Dorsolateral prefrontal cortex (tissue), 120 donors: ENCODE measurements at regions of chr7 and their contacts with region 1.

Region 1: GRCh38 chr7:79513261-79513660 is 59.8 kb upstream of the MAGI2 start:
- DNase-seq: no peak
- H3K4me3 ChIP-seq: no peak overlapping the region
- H3K27ac ChIP-seq: peak overlapping the region in 47 of 59 donors; percentile 12 to 93 (median 79)
- H3K27me3 ChIP-seq: no peaks in the 10 kb centered on the region
- CTCF ChIP-seq: no peak

Region 2: DNA sequence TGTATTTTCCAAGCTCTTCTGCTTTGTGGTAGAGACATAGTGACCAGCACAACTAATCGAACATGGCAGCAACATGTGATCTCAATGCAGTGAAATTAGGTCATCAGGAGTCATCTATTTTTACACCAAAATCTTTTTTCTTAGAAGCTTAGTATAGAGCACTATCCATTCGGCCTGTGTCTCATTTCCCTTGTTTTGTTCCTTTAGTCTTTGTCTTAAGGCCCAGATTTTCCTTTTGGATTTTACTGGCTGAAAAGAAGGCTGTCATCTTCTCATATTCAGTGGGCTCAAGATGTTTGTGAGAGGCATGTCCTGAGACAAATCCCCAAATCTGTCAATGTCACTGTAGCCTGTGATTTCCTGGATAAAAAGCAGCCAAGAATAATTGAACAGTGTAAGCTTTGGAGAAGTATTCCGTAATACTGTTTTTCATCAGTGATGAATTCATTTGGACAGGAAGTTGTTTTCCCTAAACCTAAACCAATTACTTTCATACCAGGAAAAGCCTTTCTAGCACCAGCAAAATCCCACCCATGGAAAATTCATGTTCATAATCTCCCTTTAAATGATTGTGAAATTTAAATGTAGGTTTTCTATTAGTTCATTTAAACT is 115.0 kb before region 1 on chr7:
- intact Hi-C with region 1: no loop called
- DNase-seq: no peak
- H3K4me3 ChIP-seq: peak overlapping the region in 11 of 59 donors; percentile 1 to 30 (median 5)
- H3K27ac ChIP-seq: peak overlapping the region in 53 of 59 donors; percentile 1 to 80 (median 44)
- H3K27me3 ChIP-seq: no peaks in the 10 kb centered on the region
- CTCF ChIP-seq: no peak

Region 3: DNA sequence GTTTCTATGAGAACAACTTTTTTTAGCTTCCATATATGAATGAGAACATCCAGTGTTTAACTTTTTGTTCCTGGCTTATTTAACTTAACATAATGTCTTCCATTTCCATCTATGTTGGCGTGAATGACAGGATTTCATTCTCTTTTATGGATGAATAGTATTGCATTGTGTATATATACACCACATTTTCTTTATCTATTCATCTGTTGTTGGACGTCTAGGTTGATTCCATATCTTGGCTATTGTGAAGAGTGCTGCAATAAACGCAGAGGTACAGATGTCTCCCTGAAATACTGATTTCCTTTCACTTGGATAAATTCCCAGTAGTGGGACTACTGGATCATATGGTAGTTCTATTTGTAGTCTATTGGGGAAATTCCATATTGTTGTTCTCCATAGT is 15.5 kb before region 1 on chr7:
- intact Hi-C with region 1: loop called in 1 of 2 experiments (anchors 1 kb)
- DNase-seq: no peak
- H3K4me3 ChIP-seq: no peak overlapping the region
- H3K27ac ChIP-seq: peak overlapping the region in 16 of 59 donors; percentile 0 to 76 (median 34)
- H3K27me3 ChIP-seq: no peaks in the 10 kb centered on the region
- CTCF ChIP-seq: no peak